Activated naive CD4-positive, alpha-beta T cell treated with anti-CD3 and anti-CD28 coated beads for 36 hours (primary cell): ENCODE measurements at regions of chr6 and their contacts with region 1.

Region 1: DNA sequence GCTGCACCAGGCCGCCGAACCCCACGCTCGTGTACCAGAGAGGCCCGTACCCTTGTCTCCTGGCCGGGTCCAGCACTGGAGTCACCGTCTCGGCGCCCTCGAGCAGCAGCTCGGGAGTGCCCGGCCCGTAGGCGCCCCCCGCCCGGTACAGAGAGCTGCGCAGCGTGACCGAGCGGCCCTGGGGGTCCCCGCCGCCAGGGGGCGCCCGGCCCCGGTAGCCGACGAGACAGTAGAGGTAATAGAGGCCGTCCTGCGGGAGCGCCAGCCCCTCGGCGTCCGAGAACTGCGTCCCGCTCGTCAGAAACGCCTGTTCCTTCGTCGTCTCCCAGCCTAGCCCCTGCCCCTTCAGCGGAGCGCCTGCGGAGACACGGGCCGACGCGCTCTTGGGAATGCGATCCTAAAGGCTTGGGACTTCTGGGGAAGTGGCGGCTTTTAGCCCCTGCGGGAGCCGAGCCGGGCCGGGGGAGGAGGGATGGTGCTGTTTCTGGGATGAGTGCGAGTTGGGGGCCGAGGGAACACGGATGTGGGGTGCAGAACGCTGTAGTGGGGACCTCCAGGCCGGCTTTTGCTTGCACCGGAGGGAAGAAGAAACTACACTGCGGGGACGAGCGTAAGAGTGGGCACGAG is 1.3 kb downstream of the LTB start:
- DNase-seq: peak; percentile 90
- H3K4me3 Mint-ChIP-seq: peak overlapping the region; percentile 99
- H3K27ac Mint-ChIP-seq: peak overlapping the region; percentile 99
- H3K4me1 Mint-ChIP-seq: peaks cover 50% of the 10 kb centered on the region
- H3K27me3 Mint-ChIP-seq: no peaks in the 10 kb centered on the region

Region 2: DNA sequence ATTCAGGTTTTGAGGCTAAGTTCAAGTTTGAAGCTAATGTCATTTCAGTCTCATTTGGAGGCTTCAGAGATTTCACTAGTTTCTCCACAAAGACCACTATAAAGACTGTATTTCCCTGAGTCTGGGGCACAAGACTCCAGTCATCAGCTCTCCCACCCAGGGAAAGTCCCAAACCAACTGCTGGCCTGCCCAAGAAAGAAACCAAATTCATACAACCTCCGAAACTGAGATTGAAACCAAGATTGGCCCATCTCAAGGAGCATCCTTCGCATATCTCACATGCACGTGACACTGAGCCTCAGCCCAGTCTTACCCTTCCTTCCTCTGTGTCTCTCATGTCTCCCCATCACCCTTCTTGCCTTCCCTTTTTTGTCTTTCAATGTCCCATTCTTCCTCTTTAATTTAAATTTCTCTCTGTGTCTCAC is 12.4 kb before region 1 on chr6:
- CTCF ChIA-PET with region 1: interaction called, 78 read pairs
- intact Hi-C with region 1: loop called (anchors 1 kb)
- DNase-seq: peak; percentile 85
- H3K4me3 Mint-ChIP-seq: peak overlapping the region; percentile 34
- H3K27ac Mint-ChIP-seq: peak overlapping the region; percentile 83
- H3K4me1 Mint-ChIP-seq: peaks cover 76% of the 10 kb centered on the region
- H3K27me3 Mint-ChIP-seq: no peaks in the 10 kb centered on the region